ENCODE measurements at regions of chr6 and their contacts with region 1.

Region 1: GRCh38 chr6:13574149-13574570 is 241 bp upstream of the SIRT5 start:
- DNase-seq: no peak
- H3K4me3 ChIP-seq: peak overlapping the region; percentile 80
- CTCF ChIP-seq: peak; percentile 43

Region 2: GRCh38 chr6:13336553-13336952 is 237.6 kb before region 1 on chr6:
- CTCF ChIA-PET with region 1: interaction called, 32 read pairs
- POLR2A ChIA-PET with region 1: interaction called, 3 read pairs
- DNase-seq: peak; percentile 40
- H3K4me3 ChIP-seq: no peak overlapping the region
- CTCF ChIP-seq: peak; percentile 89

Region 3: GRCh38 chr6:13355043-13355951 is 218.9 kb before region 1 on chr6:
- CTCF ChIA-PET with region 1: interaction called, 17 read pairs
- POLR2A ChIA-PET with region 1: interaction called, 7 read pairs
- DNase-seq: peak; percentile 92
- H3K4me3 ChIP-seq: no peak overlapping the region
- CTCF ChIP-seq: no peak

Region 4: GRCh38 chr6:13554929-13555333 is 19.2 kb before region 1 on chr6:
- CTCF ChIA-PET with region 1: interaction called, 65 read pairs
- POLR2A ChIA-PET with region 1: interaction called, 5 read pairs
- DNase-seq: no peak
- H3K4me3 ChIP-seq: no peak overlapping the region
- CTCF ChIP-seq: no peak

Region 5: DNA sequence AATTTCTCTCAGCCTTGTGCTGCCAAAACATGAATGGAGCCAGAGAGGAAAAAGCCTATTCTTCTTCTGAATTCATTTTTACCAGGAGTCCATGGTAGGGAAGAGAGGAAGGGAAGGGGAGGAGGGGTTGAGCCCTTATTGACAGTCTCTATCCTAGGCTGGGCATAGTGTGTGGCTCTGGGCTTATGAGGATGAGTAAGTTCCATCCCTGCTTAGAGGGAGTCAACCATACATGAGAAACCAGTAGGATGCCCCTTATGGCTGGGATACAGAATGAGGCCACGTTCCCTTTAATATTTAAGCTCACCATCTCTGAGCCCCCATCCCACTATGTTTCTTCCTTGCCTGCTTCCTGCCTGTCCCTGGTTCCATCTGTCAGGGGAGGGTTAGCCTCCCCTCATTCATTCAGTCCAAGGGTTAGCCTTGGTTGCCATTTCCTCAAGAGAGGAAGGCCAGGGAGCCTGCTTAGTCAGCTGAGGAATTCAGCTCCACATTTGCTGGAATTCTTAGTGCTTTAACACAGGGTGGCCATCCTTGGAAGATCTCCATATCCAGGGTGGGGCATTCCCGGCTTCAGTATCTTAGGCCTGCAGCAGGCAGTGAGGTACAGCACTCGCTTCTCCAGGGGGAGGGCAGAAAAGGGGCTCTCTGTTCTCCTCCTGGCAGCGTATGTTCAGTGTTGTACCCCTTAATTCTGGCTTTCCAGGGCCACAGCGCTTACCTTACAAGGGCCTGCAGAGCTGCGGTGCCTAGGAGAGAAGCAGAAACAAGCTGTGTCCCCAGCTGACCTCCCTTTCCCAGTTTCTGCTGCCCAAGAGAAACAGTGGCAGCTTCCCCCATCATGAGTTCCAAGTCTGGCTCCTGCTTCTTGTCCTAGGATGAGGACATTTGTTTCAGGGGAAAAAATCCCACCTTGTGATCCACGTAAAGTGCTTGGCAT is 12.7 kb after region 1 on chr6:
- CTCF ChIA-PET with region 1: interaction called, 49 read pairs
- POLR2A ChIA-PET with region 1: no interaction called
- DNase-seq: no peak
- H3K4me3 ChIP-seq: no peak overlapping the region
- CTCF ChIP-seq: no peak

Region 6: DNA sequence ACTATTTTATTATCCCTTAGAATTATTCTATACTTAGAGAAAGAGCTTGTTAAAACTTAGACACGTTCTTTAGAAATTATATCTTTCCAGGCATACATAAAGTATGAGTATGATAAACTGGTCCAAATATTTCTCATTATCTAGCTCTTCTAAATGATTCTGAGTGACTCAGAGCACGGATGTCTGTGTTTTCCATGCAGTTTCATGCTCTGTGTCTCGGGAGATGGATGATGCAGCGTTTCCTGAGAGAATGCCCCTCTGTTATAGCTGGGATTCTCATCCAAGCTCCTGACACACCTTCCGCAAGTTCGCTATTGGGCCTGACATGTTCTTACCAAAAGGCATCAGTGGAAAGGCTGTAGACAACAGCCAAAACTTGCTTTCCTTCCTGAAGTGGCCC is 19.6 kb after region 1 on chr6:
- CTCF ChIA-PET with region 1: interaction called, 49 read pairs
- POLR2A ChIA-PET with region 1: no interaction called
- DNase-seq: no peak
- H3K4me3 ChIP-seq: no peak overlapping the region
- CTCF ChIP-seq: no peak

Region 7: DNA sequence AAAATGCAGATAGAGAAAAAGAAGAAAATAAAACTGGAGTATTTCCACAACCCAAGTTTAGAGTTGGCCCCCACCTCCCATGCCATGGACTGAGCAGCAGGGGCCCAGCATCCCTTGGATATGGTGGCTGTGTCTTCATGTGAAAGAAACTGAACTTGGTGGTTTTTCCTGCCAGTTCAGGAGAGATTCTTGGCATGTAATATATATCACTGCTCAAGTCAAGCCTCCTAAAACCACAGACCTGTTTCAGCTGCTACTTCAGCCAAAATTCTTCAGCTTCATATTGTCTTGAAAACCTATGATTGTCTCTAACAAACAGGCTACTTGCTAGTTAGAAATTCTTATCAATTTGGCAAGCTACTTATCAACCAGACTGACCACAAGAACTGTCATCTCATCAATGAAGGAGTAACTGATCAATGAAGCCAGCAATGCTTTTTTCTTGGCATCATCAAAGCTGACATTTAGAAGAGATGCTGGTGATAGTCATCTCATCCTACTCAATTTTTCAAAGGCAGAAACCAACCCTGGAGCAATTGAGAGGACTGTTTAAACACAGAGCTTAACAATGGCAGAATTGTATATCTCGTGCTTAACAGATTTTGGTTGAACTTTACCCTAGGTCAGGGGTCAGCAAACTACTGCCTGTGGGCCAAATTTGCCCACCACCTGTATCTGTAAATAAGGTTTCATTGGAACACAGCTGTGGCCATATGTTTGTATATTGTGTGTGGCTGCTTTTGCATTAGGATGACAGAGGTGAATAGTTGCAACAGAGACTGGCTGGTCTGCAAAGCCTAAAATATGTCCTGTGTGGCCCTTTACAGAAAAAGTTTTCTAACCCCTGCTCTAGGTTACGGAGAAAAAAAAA is 30.6 kb after region 1 on chr6:
- CTCF ChIA-PET with region 1: interaction called, 12 read pairs
- POLR2A ChIA-PET with region 1: interaction called, 3 read pairs
- DNase-seq: no peak
- H3K4me3 ChIP-seq: no peak overlapping the region
- CTCF ChIP-seq: no peak

Region 8: GRCh38 chr6:13846841-13847240 is 272.7 kb after region 1 on chr6:
- CTCF ChIA-PET with region 1: no interaction called
- POLR2A ChIA-PET with region 1: no interaction called
- DNase-seq: no peak
- H3K4me3 ChIP-seq: no peak overlapping the region
- CTCF ChIP-seq: no peak